Heart right ventricle (tissue), 16 donors: ENCODE measurements at regions of chr1 and their contacts with region 1.

Region 1: GRCh38 chr1:30034627-30035521 is 688.5 kb downstream of the MATN1 start:
- DNase-seq: peak in 1 of 2 donors; percentile 27
- ATAC-seq: peak in 1 of 8 donors; percentile 33
- H3K4me3 ChIP-seq: no peak overlapping the region
- H3K27ac ChIP-seq: no peak overlapping the region
- H3K4me1 ChIP-seq: no peaks in the 10 kb centered on the region
- H3K27me3 ChIP-seq: peaks cover 0 to 24% (median 12%) of the 10 kb centered on the region in 7 donors
- CTCF ChIP-seq: no peak

Region 2: GRCh38 chr1:29944253-29944905 is 90.5 kb before region 1 on chr1:
- intact Hi-C with region 1: loop called in 1 of 10 experiments (anchors 10 kb)
- DNase-seq: no peak
- ATAC-seq: no peak
- H3K4me3 ChIP-seq: no peak overlapping the region
- H3K27ac ChIP-seq: no peak overlapping the region
- H3K4me1 ChIP-seq: no peaks in the 10 kb centered on the region
- H3K27me3 ChIP-seq: peaks cover 0 to 52% (median 22%) of the 10 kb centered on the region in 7 donors
- CTCF ChIP-seq: no peak